Gastrocnemius medialis (tissue), 4 donors: ENCODE measurements at regions of chr2 and their contacts with region 1.

Region 1: GRCh38 chr2:56410140-56410539 is 226.3 kb downstream of the CCDC85A start:
- DNase-seq: no peak
- ATAC-seq: no peak
- H3K4me3 ChIP-seq: no peak overlapping the region
- H3K27ac ChIP-seq: no peak overlapping the region
- H3K4me1 ChIP-seq: no peaks in the 10 kb centered on the region
- H3K27me3 ChIP-seq: no peaks in the 10 kb centered on the region
- CTCF ChIP-seq: no peak
- POLR2A ChIP-seq: no peak

Region 2: DNA sequence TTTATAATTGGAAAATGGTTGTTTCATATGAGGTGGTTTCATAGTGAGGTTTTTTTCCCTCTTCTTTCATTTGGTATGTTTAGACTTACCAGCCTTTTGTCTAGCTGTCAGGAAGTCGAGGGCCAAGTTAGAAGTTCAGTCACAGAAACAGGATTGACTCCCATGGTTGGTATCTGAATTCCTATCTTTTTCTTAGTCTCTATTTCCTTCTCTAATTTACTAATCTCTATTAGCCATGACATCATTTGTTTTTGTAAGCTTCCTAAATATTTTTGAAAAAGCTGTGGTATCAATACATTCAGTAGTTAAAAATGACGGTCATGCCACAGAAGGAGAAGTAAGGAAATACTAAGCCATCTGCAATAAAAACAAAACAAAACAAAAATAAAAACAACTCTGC is 19.5 kb before region 1 on chr2:
- in situ Hi-C with region 1: no loop called
- intact Hi-C with region 1: no loop called
- DNase-seq: no peak
- ATAC-seq: no peak
- H3K4me3 ChIP-seq: no peak overlapping the region
- H3K27ac ChIP-seq: no peak overlapping the region
- H3K4me1 ChIP-seq: no peaks in the 10 kb centered on the region
- H3K27me3 ChIP-seq: no peaks in the 10 kb centered on the region
- CTCF ChIP-seq: no peak
- POLR2A ChIP-seq: no peak

Region 3: DNA sequence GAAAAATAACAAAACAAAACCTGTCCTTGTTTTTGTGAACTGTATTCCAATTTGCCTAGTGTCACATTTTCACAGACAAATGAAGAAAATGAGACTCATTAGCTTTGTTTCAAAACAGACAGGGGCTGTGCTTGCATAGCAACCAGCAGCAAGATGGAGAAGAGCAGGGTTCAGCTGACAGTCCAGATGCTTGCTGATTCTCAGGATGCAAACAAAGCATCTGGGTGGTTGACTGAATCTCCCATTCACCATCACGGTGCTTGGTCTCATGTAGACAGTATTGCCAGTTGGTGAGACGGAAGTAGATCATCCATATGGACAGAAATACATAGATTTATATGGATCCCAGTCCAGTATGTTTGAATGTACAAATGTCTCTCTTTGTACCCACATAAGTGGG is 100.5 kb after region 1 on chr2:
- in situ Hi-C with region 1: no loop called
- intact Hi-C with region 1: loop called (anchors 5 kb)
- DNase-seq: no peak
- ATAC-seq: no peak
- H3K4me3 ChIP-seq: no peak overlapping the region
- H3K27ac ChIP-seq: no peak overlapping the region
- H3K4me1 ChIP-seq: no peaks in the 10 kb centered on the region
- H3K27me3 ChIP-seq: no peaks in the 10 kb centered on the region
- CTCF ChIP-seq: no peak
- POLR2A ChIP-seq: no peak